Naive thymus-derived CD4-positive, alpha-beta T cell (primary cell): ENCODE measurements at regions of chr12 and their contacts with region 1.

Region 1: GRCh38 chr12:111841750-111842555 is at the start of gene MAPKAPK5:
- DNase-seq: peak; percentile 95 to 99 (median 98)
- ATAC-seq: peak; percentile 93
- H3K4me3 ChIP-seq: peak within 1 kb of the TSS; percentile 99
- H3K4me3 Mint-ChIP-seq: peak within 1 kb of the TSS; percentile 90 to 99 (median 98)
- H3K27ac ChIP-seq: peak within 1 kb of the TSS; percentile 89
- H3K27ac Mint-ChIP-seq: peak within 1 kb of the TSS; percentile 91 to 100 (median 98)
- H3K4me1 ChIP-seq: peaks cover 28 to 32% of the 10 kb centered on the region in 2 donors
- H3K4me1 Mint-ChIP-seq: peaks cover 40 to 82% (median 69%) of the 10 kb centered on the region in 7 donors
- H3K27me3 ChIP-seq: no peaks in the 10 kb centered on the region
- H3K27me3 Mint-ChIP-seq: peaks cover 0 to 2% (median 0%) of the 10 kb centered on the region in 5 donors
- total RNA-seq, gene MAPKAPK5: 46.1 to 72.1 (median 60.0) TPM

Region 2: GRCh38 chr12:111505601-111506036 is 336.3 kb before region 1 on chr12:
- CTCF ChIA-PET with region 1: no interaction called
- POLR2A ChIA-PET with region 1: no interaction called
- intact Hi-C with region 1: no loop called
- DNase-seq: no peak
- ATAC-seq: peak; percentile 37
- H3K4me3 ChIP-seq: no peak overlapping the region
- H3K4me3 Mint-ChIP-seq: peak overlapping the region in 1 of 10 donors; percentile 35
- H3K27ac ChIP-seq: no peak overlapping the region
- H3K27ac Mint-ChIP-seq: peak overlapping the region in 3 of 9 donors; percentile 4 to 44 (median 28)
- H3K4me1 ChIP-seq: peaks cover 0 to 7% of the 10 kb centered on the region in 2 donors
- H3K4me1 Mint-ChIP-seq: peaks cover 0 to 14% (median 0%) of the 10 kb centered on the region in 7 donors
- H3K27me3 ChIP-seq: no peaks in the 10 kb centered on the region
- H3K27me3 Mint-ChIP-seq: no peaks in the 10 kb centered on the region

Region 3: DNA sequence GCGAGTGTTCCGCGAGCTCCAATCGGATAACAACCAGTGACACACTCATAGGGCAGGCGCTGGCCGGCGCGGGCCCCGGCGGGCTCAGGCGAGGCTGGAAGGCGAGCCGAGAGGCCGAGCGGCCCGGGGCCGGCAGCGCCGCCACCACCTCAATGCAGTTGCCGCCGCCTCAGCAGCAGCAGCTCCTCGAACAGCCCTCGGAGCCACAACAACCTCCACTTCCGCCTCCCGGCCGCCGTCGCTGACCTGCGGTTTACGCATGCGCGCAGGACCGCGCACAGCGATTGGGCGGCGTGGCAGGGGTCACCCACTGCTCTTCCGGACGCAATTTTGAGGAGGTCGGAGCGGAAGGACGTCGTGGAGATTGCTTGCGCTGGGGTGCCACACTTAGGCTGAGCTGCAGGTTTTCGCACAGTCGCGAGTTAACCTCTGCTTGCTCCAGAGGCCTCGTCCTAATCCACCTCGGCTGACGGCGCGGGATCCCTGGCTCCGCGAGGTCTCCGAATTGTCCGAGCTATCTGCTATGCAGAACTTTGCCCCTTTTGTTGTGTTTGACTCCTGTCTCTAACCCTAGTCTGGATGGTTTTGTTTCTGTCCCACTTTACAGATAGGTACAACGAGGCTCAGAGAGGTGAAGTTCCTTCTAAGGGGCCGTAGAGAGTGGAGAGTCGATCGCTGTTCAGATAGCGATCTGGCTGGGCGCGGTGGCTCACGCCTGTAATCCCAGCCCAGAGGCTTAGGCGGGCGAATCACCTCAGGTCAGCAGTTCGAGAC is 156.0 kb before region 1 on chr12 and contains the starts of genes ACAD10 and BRAP:
- CTCF ChIA-PET with region 1: no interaction called
- POLR2A ChIA-PET with region 1: interaction called, 6 read pairs
- intact Hi-C with region 1: loop called in 1 of 2 experiments (anchors 5 kb)
- DNase-seq: peak; percentile 82 to 98 (median 93)
- ATAC-seq: peak; percentile 96
- H3K4me3 ChIP-seq: peak within 1 kb of the TSS; percentile 90
- H3K4me3 Mint-ChIP-seq: peak within 1 kb of the TSS; percentile 90 to 98 (median 96)
- H3K27ac ChIP-seq: peak within 1 kb of the TSS; percentile 83
- H3K27ac Mint-ChIP-seq: peak within 1 kb of the TSS; percentile 90 to 98 (median 96)
- H3K4me1 ChIP-seq: peaks cover 17 to 18% of the 10 kb centered on the region in 2 donors
- H3K4me1 Mint-ChIP-seq: peaks cover 23 to 54% (median 44%) of the 10 kb centered on the region in 7 donors
- H3K27me3 ChIP-seq: no peaks in the 10 kb centered on the region
- H3K27me3 Mint-ChIP-seq: peaks cover 0 to 2% (median 0%) of the 10 kb centered on the region in 5 donors
- total RNA-seq, gene ACAD10: 28.4 to 65.3 (median 36.0) TPM
- total RNA-seq, gene BRAP: 19.5 to 25.5 (median 23.0) TPM

Region 4: DNA sequence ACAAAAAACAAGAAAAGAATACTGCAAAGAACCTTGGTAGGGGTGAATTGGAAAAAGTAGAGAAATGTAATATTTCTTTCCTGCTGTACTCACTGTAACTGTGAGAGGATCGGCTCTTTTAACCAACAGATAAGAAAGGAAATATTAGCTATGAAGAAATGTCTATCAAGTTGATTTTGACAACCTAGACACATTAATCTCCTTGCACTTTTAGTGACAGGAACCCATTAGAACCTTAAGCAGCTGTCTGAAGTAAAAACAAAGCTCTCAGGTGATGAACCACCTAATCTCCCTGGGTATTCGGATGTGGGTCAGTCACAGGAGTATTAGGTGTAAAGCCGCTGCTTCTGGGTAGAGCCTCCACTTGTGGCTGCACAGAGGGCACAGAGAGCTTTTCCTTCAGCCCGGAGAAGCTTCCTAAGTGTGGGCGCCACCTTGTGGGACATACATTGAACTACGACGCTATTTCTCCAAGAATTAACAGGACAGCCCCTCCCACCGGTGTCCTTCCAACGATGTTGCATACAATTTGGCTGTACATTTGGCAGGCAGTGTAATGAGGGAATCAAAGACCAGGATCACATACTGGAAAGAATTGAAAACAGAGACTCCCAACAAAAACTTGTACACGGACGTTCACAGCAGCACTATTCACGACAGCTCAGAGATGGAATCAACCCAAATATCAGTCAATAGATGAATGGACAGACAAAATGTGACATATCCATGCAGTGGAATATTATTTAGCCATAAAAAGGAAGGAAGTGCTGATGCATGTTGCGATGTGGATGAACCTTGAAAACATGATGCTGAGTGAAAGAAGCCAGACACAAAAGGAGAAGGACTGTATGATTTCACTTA is 28.8 kb before region 1 on chr12:
- CTCF ChIA-PET with region 1: no interaction called
- POLR2A ChIA-PET with region 1: interaction called, 4 read pairs
- intact Hi-C with region 1: loop called in 1 of 2 experiments (anchors 2 kb)
- DNase-seq: peak; percentile 37 to 67 (median 57)
- ATAC-seq: peak; percentile 99
- H3K4me3 ChIP-seq: no peak overlapping the region
- H3K4me3 Mint-ChIP-seq: peak overlapping the region in 4 of 10 donors; percentile 5 to 39 (median 34)
- H3K27ac ChIP-seq: no peak overlapping the region
- H3K27ac Mint-ChIP-seq: peak overlapping the region in 2 of 9 donors; percentile 5 to 52
- H3K4me1 ChIP-seq: peaks cover 0 to 8% of the 10 kb centered on the region in 2 donors
- H3K4me1 Mint-ChIP-seq: peaks cover 5 to 11% (median 8%) of the 10 kb centered on the region in 7 donors
- H3K27me3 ChIP-seq: no peaks in the 10 kb centered on the region
- H3K27me3 Mint-ChIP-seq: peaks cover 0 to 12% (median 5%) of the 10 kb centered on the region in 5 donors

Region 5: GRCh38 chr12:111826316-111826715 is 15.6 kb before region 1 on chr12:
- CTCF ChIA-PET with region 1: interaction called, 3 read pairs
- POLR2A ChIA-PET with region 1: interaction called, 20 read pairs
- intact Hi-C with region 1: no loop called
- DNase-seq: no peak
- ATAC-seq: no peak
- H3K4me3 ChIP-seq: no peak overlapping the region
- H3K4me3 Mint-ChIP-seq: no peak overlapping the region
- H3K27ac ChIP-seq: no peak overlapping the region
- H3K27ac Mint-ChIP-seq: no peak overlapping the region
- H3K4me1 ChIP-seq: no peaks in the 10 kb centered on the region
- H3K4me1 Mint-ChIP-seq: peaks cover 0 to 2% (median 0%) of the 10 kb centered on the region in 7 donors
- H3K27me3 ChIP-seq: no peaks in the 10 kb centered on the region
- H3K27me3 Mint-ChIP-seq: peaks cover 0 to 42% (median 8%) of the 10 kb centered on the region in 5 donors

Region 6: GRCh38 chr12:112025808-112026375 is 183.9 kb after region 1 on chr12:
- CTCF ChIA-PET with region 1: no interaction called
- POLR2A ChIA-PET with region 1: no interaction called
- intact Hi-C with region 1: no loop called
- DNase-seq: no peak
- ATAC-seq: no peak
- H3K4me3 ChIP-seq: no peak overlapping the region
- H3K4me3 Mint-ChIP-seq: peak overlapping the region in 1 of 10 donors; percentile 1
- H3K27ac ChIP-seq: peak overlapping the region; percentile 44
- H3K27ac Mint-ChIP-seq: peak overlapping the region; percentile 51 to 94 (median 72)
- H3K4me1 ChIP-seq: peaks cover 0 to 7% of the 10 kb centered on the region in 2 donors
- H3K4me1 Mint-ChIP-seq: peaks cover 14 to 56% (median 34%) of the 10 kb centered on the region in 7 donors
- H3K27me3 ChIP-seq: no peaks in the 10 kb centered on the region
- H3K27me3 Mint-ChIP-seq: no peaks in the 10 kb centered on the region

Region 7: DNA sequence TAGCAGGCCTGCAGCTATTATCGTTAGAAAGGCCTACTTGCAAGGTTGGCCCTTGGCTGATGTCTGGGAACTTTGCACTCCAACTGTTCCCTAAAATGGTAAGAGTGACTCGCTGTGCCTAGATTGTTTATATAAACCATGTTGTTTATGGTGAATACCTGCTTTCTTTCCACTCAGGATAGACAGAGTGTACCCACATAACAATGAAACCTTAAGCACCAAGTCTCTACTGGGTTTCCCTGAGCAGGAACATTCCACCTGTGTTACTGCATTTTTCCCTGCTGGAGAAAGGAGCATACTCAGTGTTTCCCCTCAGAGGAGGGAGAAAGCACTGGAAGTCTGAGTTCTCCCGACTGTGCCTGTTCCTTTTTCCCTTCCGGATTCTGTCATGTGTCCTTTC is 204.1 kb after region 1 on chr12:
- CTCF ChIA-PET with region 1: no interaction called
- POLR2A ChIA-PET with region 1: no interaction called
- intact Hi-C with region 1: no loop called
- DNase-seq: no peak
- ATAC-seq: no peak
- H3K4me3 ChIP-seq: no peak overlapping the region
- H3K4me3 Mint-ChIP-seq: no peak overlapping the region
- H3K27ac ChIP-seq: no peak overlapping the region
- H3K27ac Mint-ChIP-seq: peak overlapping the region in 2 of 9 donors; percentile 10 to 35
- H3K4me1 ChIP-seq: no peaks in the 10 kb centered on the region
- H3K4me1 Mint-ChIP-seq: peaks cover 0 to 8% (median 0%) of the 10 kb centered on the region in 7 donors
- H3K27me3 ChIP-seq: no peaks in the 10 kb centered on the region
- H3K27me3 Mint-ChIP-seq: no peaks in the 10 kb centered on the region

Region 8: GRCh38 chr12:112108201-112109079 is 266.5 kb after region 1 on chr12 and contains the start of gene NAA25:
- CTCF ChIA-PET with region 1: no interaction called
- POLR2A ChIA-PET with region 1: interaction called, 5 read pairs
- intact Hi-C with region 1: loop called (anchors 1 kb)
- DNase-seq: peak; percentile 79 to 90 (median 86)
- ATAC-seq: peak; percentile 92
- H3K4me3 ChIP-seq: peak within 1 kb of the TSS; percentile 100
- H3K4me3 Mint-ChIP-seq: peak within 1 kb of the TSS; percentile 96 to 99 (median 98)
- H3K27ac ChIP-seq: peak within 1 kb of the TSS; percentile 92
- H3K27ac Mint-ChIP-seq: peak within 1 kb of the TSS; percentile 93 to 98 (median 97)
- H3K4me1 ChIP-seq: peaks cover 12 to 22% of the 10 kb centered on the region in 2 donors
- H3K4me1 Mint-ChIP-seq: peaks cover 27 to 53% (median 45%) of the 10 kb centered on the region in 7 donors
- H3K27me3 ChIP-seq: no peaks in the 10 kb centered on the region
- H3K27me3 Mint-ChIP-seq: no peaks in the 10 kb centered on the region
- total RNA-seq, gene NAA25: 39.1 to 43.0 (median 42.1) TPM

Region 9: GRCh38 chr12:112130441-112130998 is 288.6 kb after region 1 on chr12:
- CTCF ChIA-PET with region 1: no interaction called
- POLR2A ChIA-PET with region 1: interaction called, 4 read pairs
- intact Hi-C with region 1: loop called in 1 of 2 experiments (anchors 2 kb)
- DNase-seq: peak in 7 of 9 donors; percentile 38 to 75 (median 67)
- ATAC-seq: peak; percentile 89
- H3K4me3 ChIP-seq: peak overlapping the region; percentile 33
- H3K4me3 Mint-ChIP-seq: peak overlapping the region in 9 of 10 donors; percentile 52 to 81 (median 70)
- H3K27ac ChIP-seq: peak overlapping the region; percentile 72
- H3K27ac Mint-ChIP-seq: peak overlapping the region; percentile 3 to 91 (median 85)
- H3K4me1 ChIP-seq: peaks cover 38 to 55% of the 10 kb centered on the region in 2 donors
- H3K4me1 Mint-ChIP-seq: peaks cover 32 to 72% (median 59%) of the 10 kb centered on the region in 7 donors
- H3K27me3 ChIP-seq: no peaks in the 10 kb centered on the region
- H3K27me3 Mint-ChIP-seq: no peaks in the 10 kb centered on the region

Region 10: GRCh38 chr12:112140728-112141127 is 298.8 kb after region 1 on chr12:
- CTCF ChIA-PET with region 1: no interaction called
- POLR2A ChIA-PET with region 1: no interaction called
- intact Hi-C with region 1: no loop called
- DNase-seq: no peak
- ATAC-seq: peak; percentile 48
- H3K4me3 ChIP-seq: no peak overlapping the region
- H3K4me3 Mint-ChIP-seq: no peak overlapping the region
- H3K27ac ChIP-seq: no peak overlapping the region
- H3K27ac Mint-ChIP-seq: peak overlapping the region in 3 of 9 donors; percentile 1 to 29 (median 16)
- H3K4me1 ChIP-seq: no peaks in the 10 kb centered on the region
- H3K4me1 Mint-ChIP-seq: peaks cover 0 to 8% (median 5%) of the 10 kb centered on the region in 7 donors
- H3K27me3 ChIP-seq: no peaks in the 10 kb centered on the region
- H3K27me3 Mint-ChIP-seq: no peaks in the 10 kb centered on the region

Region 11: DNA sequence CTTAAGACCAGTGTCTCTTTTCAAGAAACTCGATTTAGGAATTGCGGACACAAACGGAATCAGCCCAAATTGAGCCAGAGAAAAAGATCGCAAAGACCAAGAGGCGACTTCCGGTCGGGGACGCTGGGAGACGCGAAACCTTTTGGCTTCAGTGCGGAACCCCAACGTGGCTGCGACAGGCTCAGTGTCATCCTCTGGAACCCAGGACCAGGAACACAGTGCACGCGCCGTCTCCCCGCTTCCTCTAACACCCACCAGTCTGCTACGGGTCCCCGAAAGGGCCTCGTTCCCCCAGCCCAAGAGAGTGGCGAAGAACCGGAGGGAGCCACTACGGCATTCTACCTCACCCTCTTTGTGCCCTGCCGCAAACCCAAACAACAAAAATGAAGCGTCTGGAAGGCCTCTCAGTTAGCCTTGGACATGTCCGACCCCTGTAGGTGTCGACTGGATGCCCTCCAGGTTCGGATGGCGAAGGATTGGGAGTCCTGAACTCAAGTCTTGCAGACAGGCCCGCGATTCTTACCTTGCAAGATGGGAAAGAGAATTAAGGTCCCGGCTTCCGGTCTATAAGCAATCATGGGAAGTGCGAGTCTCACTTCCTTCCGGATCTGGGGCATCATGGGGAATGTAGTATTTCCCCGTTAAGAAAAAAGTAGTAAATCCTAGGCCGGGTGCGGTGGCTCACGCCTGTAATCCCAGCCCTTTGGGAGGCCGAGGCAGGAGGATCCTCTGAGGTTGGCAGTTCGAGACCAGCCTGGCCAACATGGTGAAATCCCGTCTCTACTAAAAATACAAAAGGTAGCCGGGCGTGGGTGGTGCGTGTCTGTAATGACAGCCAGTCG is 567.3 kb after region 1 on chr12 and contains the start of gene RPL6:
- CTCF ChIA-PET with region 1: no interaction called
- POLR2A ChIA-PET with region 1: interaction called, 3 read pairs
- intact Hi-C with region 1: loop called (anchors 2 to 5 kb)
- DNase-seq: peak; percentile 61 to 88 (median 84)
- ATAC-seq: peak; percentile 94
- H3K4me3 ChIP-seq: peak within 1 kb of the TSS; percentile 93
- H3K4me3 Mint-ChIP-seq: peak within 1 kb of the TSS; percentile 97 to 100 (median 100)
- H3K27ac ChIP-seq: peak within 1 kb of the TSS; percentile 84
- H3K27ac Mint-ChIP-seq: peak within 1 kb of the TSS; percentile 99 to 100 (median 100)
- H3K4me1 ChIP-seq: peaks cover 18 to 20% of the 10 kb centered on the region in 2 donors
- H3K4me1 Mint-ChIP-seq: peaks cover 17 to 48% (median 36%) of the 10 kb centered on the region in 7 donors
- H3K27me3 ChIP-seq: no peaks in the 10 kb centered on the region
- H3K27me3 Mint-ChIP-seq: no peaks in the 10 kb centered on the region
- total RNA-seq, gene RPL6: 1,134 to 1,668 (median 1,601) TPM